ENCODE measurements at regions of chr1 and their contacts with region 1.

Region 1: GRCh38 chr1:90336552-90337324 is 341.8 kb downstream of the ZNF326 start:
- DNase-seq: no peak
- ATAC-seq: no peak
- H3K4me3 ChIP-seq: no peak overlapping the region
- H3K27ac ChIP-seq: no peak overlapping the region
- H3K4me1 ChIP-seq: no peaks in the 10 kb centered on the region
- H3K27me3 ChIP-seq: no peaks in the 10 kb centered on the region
- CTCF ChIP-seq: 0 out of 6 replicates have a peak, but pooled peaks of 1 of the 3 experiments have one; percentile 12
- EP300 ChIP-seq: no peak
- POLR2A ChIP-seq: no peak
- RAD21 ChIP-seq: no peak

Region 2: DNA sequence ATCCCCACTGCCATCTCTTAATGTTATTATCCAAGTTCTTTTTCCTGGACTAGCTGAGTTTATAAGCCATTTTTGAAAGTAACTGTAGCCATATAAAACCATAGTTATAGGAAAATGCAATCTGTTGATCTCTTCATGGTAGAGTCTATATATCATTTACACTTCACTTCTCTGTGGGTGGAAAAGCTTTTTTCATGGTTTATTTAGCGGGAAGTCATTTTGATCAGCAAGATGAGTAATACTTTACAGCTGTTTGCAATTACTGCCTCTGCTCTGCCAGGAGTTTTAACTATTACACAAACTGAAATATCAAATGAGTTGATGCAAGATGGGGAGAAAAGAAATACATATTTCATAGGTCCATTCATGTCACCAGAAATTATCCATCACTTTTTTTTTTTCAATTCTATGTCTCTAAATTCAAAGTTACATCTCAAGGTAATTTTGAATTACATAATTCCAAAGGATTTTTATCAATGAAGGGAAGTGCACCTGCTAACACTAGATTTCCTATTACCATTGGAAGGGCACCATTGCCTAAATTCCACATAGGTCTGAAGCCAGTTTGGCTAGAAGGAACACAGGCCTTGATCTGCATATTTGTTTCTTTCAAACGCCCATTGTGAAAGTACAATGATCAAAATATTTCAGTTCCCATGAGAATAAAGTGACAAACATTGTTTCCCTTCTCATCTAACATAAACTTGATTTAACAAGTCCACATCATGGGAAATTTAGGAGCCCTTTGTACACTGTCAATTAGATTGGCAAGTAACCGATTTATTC is 45.1 kb before region 1 on chr1:
- CTCF ChIA-PET with region 1: no interaction called
- POLR2A ChIA-PET with region 1: no interaction called
- RAD21 ChIA-PET with region 1: no interaction called
- SMC1A ChIA-PET with region 1: no interaction called
- in situ Hi-C with region 1: no loop called
- intact Hi-C with region 1: no loop called
- DNase-seq: no peak
- ATAC-seq: no peak
- H3K4me3 ChIP-seq: no peak overlapping the region
- H3K27ac ChIP-seq: no peak overlapping the region
- H3K4me1 ChIP-seq: no peaks in the 10 kb centered on the region
- H3K27me3 ChIP-seq: no peaks in the 10 kb centered on the region
- CTCF ChIP-seq: no peak
- EP300 ChIP-seq: no peak
- POLR2A ChIP-seq: no peak
- RAD21 ChIP-seq: no peak

Region 3: GRCh38 chr1:90325168-90325567 is 11.6 kb before region 1 on chr1:
- CTCF ChIA-PET with region 1: interaction called, 8 read pairs
- POLR2A ChIA-PET with region 1: no interaction called
- RAD21 ChIA-PET with region 1: interaction called, 7 read pairs
- SMC1A ChIA-PET with region 1: interaction called, 14 read pairs
- in situ Hi-C with region 1: no loop called
- intact Hi-C with region 1: no loop called
- DNase-seq: no peak
- ATAC-seq: no peak
- H3K4me3 ChIP-seq: no peak overlapping the region
- H3K27ac ChIP-seq: no peak overlapping the region
- H3K4me1 ChIP-seq: no peaks in the 10 kb centered on the region
- H3K27me3 ChIP-seq: 0 out of 4 replicates have a peak, but pooled peaks cover 0 to 2% of the 10 kb centered on the region in 2 experiments
- CTCF ChIP-seq: no peak
- EP300 ChIP-seq: no peak
- POLR2A ChIP-seq: no peak
- RAD21 ChIP-seq: no peak